K562 (cell line): ENCODE measurements at regions of chr4 and their contacts with region 1.

Region 1: GRCh38 chr4:173420324-173420752 is 21.4 kb upstream of the SCRG1 start:
- DNase-seq: peak; percentile 18 to 26 (median 20)
- ATAC-seq: peak; percentile 62
- H3K4me3 ChIP-seq: no peak overlapping the region
- H3K27ac ChIP-seq: no peak overlapping the region
- H3K4me1 ChIP-seq: no peaks in the 10 kb centered on the region
- H3K27me3 ChIP-seq: no peaks in the 10 kb centered on the region
- CTCF ChIP-seq: peak; percentile 26 to 64 (median 39); a peak in 4 of 6 replicates
- EP300 ChIP-seq: no peak
- POLR2A ChIP-seq: no peak
- RAD21 ChIP-seq: peak; percentile 64 to 68

Region 2: GRCh38 chr4:173013232-173013930 is 407.0 kb before region 1 on chr4:
- CTCF ChIA-PET with region 1: interaction called, 14 read pairs
- POLR2A ChIA-PET with region 1: interaction called, 3 read pairs
- in situ Hi-C with region 1: loop called (anchors 5 kb)
- intact Hi-C with region 1: loop called (anchors 1 kb)
- DNase-seq: peak; percentile 57 to 62 (median 62)
- ATAC-seq: peak; percentile 82
- H3K4me3 ChIP-seq: no peak overlapping the region
- H3K27ac ChIP-seq: no peak overlapping the region
- H3K4me1 ChIP-seq: peaks cover 0 to 4% of the 10 kb centered on the region in 2 experiments; a peak in 1 of 5 replicates
- H3K27me3 ChIP-seq: no peaks in the 10 kb centered on the region; a peak in 1 of 5 replicates
- CTCF ChIP-seq: peak; percentile 42 to 74 (median 64); a peak in 5 of 6 replicates
- EP300 ChIP-seq: no peak
- POLR2A ChIP-seq: no peak
- RAD21 ChIP-seq: peak; percentile 66 to 77

Region 3: DNA sequence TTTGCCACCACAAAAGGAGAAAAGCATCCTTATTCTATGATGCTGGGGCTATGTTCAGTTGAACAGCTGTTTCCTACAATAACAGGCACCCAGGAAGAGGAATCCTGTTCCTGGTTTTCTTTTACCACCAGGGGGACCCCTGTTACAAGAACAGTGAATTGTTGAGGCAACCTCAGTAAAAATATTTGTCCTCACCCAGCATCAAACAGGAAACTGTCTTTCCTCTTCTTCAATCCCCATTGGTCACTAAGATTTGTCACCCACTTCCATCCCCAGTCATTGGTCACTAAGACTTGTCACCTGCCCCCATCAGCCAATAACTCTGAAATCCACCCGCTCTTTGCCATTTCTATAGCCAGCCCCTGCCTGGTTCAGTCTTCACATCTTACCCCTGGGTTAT is 395.2 kb before region 1 on chr4:
- CTCF ChIA-PET with region 1: interaction called, 3 read pairs
- POLR2A ChIA-PET with region 1: no interaction called
- in situ Hi-C with region 1: no loop called
- intact Hi-C with region 1: loop called (anchors 2 kb)
- DNase-seq: peak; percentile 52 to 77 (median 58)
- ATAC-seq: peak; percentile 95
- H3K4me3 ChIP-seq: no peak overlapping the region
- H3K27ac ChIP-seq: no peak overlapping the region
- H3K4me1 ChIP-seq: no peaks in the 10 kb centered on the region
- H3K27me3 ChIP-seq: no peaks in the 10 kb centered on the region
- CTCF ChIP-seq: peak; percentile 72 to 87 (median 73)
- EP300 ChIP-seq: no peak
- POLR2A ChIP-seq: no peak
- RAD21 ChIP-seq: peak; percentile 87 to 93

Region 4: DNA sequence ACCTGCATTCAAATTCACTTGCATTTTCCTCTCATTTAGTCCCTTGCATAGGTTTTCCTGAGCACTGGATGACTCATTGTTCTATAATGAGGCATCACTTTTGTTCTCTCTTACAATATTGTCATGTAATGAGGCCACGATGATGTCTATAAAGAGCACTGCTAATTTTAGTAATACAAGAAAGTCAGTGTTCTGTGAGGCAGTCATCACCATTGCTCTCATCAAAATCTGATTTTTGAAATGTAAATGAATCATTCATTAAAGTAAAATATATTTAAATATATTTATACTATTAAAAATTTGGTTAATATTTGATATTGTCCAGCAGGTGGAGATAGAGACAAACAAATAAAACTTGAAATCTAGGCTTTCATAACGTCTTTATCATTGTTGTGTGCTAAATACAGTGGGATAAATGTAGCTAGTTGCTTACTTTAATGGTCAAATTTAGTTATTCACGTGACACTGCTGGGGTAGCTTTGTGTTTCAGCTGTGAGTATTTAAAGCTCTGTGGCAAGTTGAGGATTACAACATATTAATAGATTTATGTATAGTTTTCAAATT is 101.6 kb before region 1 on chr4:
- CTCF ChIA-PET with region 1: interaction called, 57 read pairs
- POLR2A ChIA-PET with region 1: no interaction called
- in situ Hi-C with region 1: loop called (anchors 5 kb)
- intact Hi-C with region 1: loop called (anchors 1 kb)
- DNase-seq: peak in 1 of 4 experiments; percentile 17
- ATAC-seq: no peak
- H3K4me3 ChIP-seq: no peak overlapping the region
- H3K27ac ChIP-seq: no peak overlapping the region
- H3K4me1 ChIP-seq: no peaks in the 10 kb centered on the region; a peak in 1 of 5 replicates
- H3K27me3 ChIP-seq: no peaks in the 10 kb centered on the region
- CTCF ChIP-seq: peak in 2 of 3 experiments; percentile 12 to 46; a peak in 3 of 6 replicates
- EP300 ChIP-seq: no peak
- POLR2A ChIP-seq: no peak
- RAD21 ChIP-seq: peak; percentile 46 to 63; a peak in 3 of 4 replicates

Region 5: DNA sequence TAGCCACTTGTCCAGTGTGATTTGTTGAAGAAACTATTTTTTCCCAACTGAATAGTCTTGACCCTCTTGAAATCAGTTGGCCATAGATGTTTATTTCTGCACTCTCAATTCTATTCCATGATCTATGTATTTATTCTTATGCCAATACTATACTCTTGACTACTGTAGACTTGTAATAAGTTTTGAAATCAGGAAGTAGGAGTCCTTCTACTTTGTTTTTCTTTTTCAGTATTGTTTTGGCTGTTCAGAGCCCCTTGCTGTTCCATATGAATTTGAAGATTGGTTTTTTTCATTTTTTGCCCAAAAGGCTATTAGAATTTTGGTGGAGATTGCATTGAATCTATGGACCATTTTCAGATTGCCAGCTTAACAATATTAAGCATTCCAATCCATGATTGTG is 39.4 kb before region 1 on chr4:
- CTCF ChIA-PET with region 1: no interaction called
- POLR2A ChIA-PET with region 1: no interaction called
- in situ Hi-C with region 1: no loop called
- intact Hi-C with region 1: no loop called
- DNase-seq: no peak
- ATAC-seq: no peak
- H3K4me3 ChIP-seq: no peak overlapping the region
- H3K27ac ChIP-seq: no peak overlapping the region
- H3K4me1 ChIP-seq: peaks cover under 1 to 4% of the 10 kb centered on the region in 2 experiments; a peak in 1 of 5 replicates
- H3K27me3 ChIP-seq: no peaks in the 10 kb centered on the region
- CTCF ChIP-seq: no peak
- EP300 ChIP-seq: no peak
- POLR2A ChIP-seq: no peak
- RAD21 ChIP-seq: no peak

Region 6: DNA sequence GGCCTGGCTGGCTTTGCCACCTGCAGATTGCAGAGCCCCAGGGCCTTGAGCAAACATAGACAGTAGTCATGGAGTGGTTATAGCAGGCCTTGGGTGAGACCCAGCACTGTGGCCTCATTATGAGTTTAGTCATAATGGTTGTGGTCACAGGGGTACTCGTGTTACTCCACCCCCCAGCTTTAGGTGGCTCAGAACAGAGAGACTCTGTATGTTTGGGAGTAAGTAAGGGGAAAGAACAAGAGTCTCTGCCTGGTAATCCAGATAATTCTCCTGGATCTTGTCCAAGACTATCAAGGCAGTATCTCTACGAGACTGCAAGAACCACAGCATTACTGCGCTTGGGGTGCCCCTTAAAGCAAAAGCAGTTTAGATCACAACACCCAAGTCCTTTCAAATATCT is 40.8 kb after region 1 on chr4:
- CTCF ChIA-PET with region 1: no interaction called
- POLR2A ChIA-PET with region 1: no interaction called
- in situ Hi-C with region 1: no loop called
- intact Hi-C with region 1: loop called (anchors 5 kb)
- DNase-seq: peak in 2 of 4 experiments; percentile 20 to 75
- ATAC-seq: peak; percentile 89
- H3K4me3 ChIP-seq: no peak overlapping the region
- H3K27ac ChIP-seq: no peak overlapping the region
- H3K4me1 ChIP-seq: peaks cover 0 to 12% of the 10 kb centered on the region in 2 experiments; a peak in 3 of 5 replicates
- H3K27me3 ChIP-seq: no peaks in the 10 kb centered on the region
- CTCF ChIP-seq: no peak
- EP300 ChIP-seq: peak; percentile 37; the same call in 1 of the 2 replicates
- POLR2A ChIP-seq: no peak
- RAD21 ChIP-seq: peak in 1 of 2 experiments; percentile 10; a peak in 1 of 4 replicates

Region 7: GRCh38 chr4:173482330-173482931 is 62.1 kb after region 1 on chr4:
- CTCF ChIA-PET with region 1: no interaction called
- POLR2A ChIA-PET with region 1: no interaction called
- in situ Hi-C with region 1: no loop called
- intact Hi-C with region 1: no loop called
- DNase-seq: no peak
- ATAC-seq: no peak
- H3K4me3 ChIP-seq: no peak overlapping the region
- H3K27ac ChIP-seq: no peak overlapping the region
- H3K4me1 ChIP-seq: no peaks in the 10 kb centered on the region; a peak in 2 of 5 replicates
- H3K27me3 ChIP-seq: no peaks in the 10 kb centered on the region
- CTCF ChIP-seq: no peak
- EP300 ChIP-seq: no peak
- POLR2A ChIP-seq: no peak
- RAD21 ChIP-seq: no peak

Region 8: GRCh38 chr4:173990126-173990868 is 570.0 kb after region 1 on chr4:
- CTCF ChIA-PET with region 1: no interaction called
- POLR2A ChIA-PET with region 1: no interaction called
- in situ Hi-C with region 1: no loop called
- intact Hi-C with region 1: loop called (anchors 10 kb)
- DNase-seq: peak in 2 of 4 experiments; percentile 15 to 41
- ATAC-seq: peak; percentile 88
- H3K4me3 ChIP-seq: no peak overlapping the region
- H3K27ac ChIP-seq: no peak overlapping the region
- H3K4me1 ChIP-seq: peaks cover 0 to 3% of the 10 kb centered on the region in 2 experiments; a peak in 2 of 5 replicates
- H3K27me3 ChIP-seq: no peaks in the 10 kb centered on the region
- CTCF ChIP-seq: peak; percentile 38 to 54 (median 50); a peak in 5 of 6 replicates
- EP300 ChIP-seq: no peak
- POLR2A ChIP-seq: no peak
- RAD21 ChIP-seq: peak; percentile 43 to 44; a peak in 3 of 4 replicates